ENCODE measurements at regions of chr17 and their contacts with region 1.

Region 1: GRCh38 chr17:385926-386876 is 33.6 kb upstream of the RPH3AL start:
- DNase-seq: peak; percentile 78
- H3K4me3 Mint-ChIP-seq: peak overlapping the region; percentile 66
- H3K27ac Mint-ChIP-seq: no peak overlapping the region
- H3K4me1 Mint-ChIP-seq: peaks cover 9% of the 10 kb centered on the region
- H3K27me3 Mint-ChIP-seq: peaks cover 9% of the 10 kb centered on the region

Region 2: DNA sequence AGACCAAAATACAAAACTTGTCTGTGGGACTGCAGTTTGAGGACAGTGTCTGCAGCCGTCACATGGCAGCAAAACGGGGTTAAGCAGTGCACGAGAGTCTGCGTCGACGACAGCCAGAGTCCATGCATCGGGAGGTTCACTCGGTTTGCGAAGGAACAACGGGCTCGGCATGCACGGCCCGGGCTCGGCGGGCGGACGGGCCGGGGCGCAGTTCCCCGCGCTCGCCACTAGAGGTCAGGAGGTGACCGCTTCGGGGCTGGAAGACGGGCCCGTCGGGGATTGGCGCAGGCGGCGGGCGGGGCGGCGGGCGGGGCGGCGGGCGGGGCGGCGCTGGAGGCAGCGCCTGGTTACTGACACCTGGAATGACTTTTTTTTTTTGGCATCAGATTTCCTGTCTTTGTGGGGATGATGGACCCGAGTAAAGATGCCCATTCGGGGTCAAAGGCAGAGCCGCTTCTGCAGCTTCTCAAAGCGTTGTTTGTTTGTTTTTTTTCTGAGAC is 242.4 kb before region 1 on chr17:
- CTCF ChIA-PET with region 1: no interaction called
- intact Hi-C with region 1: loop called (anchors 2 kb)
- DNase-seq: peak; percentile 88
- H3K4me3 Mint-ChIP-seq: no peak overlapping the region
- H3K27ac Mint-ChIP-seq: no peak overlapping the region
- H3K4me1 Mint-ChIP-seq: no peaks in the 10 kb centered on the region
- H3K27me3 Mint-ChIP-seq: peaks cover 4% of the 10 kb centered on the region

Region 3: GRCh38 chr17:497241-498034 is 111.2 kb after region 1 on chr17:
- CTCF ChIA-PET with region 1: no interaction called
- intact Hi-C with region 1: no loop called
- DNase-seq: peak; percentile 23
- H3K4me3 Mint-ChIP-seq: no peak overlapping the region
- H3K27ac Mint-ChIP-seq: no peak overlapping the region
- H3K4me1 Mint-ChIP-seq: peaks cover 35% of the 10 kb centered on the region
- H3K27me3 Mint-ChIP-seq: no peaks in the 10 kb centered on the region

Measured in activated naive CD4-positive, alpha-beta T cell treated with anti-CD3 and anti-CD28 coated beads for 36 hours (primary cell).